PC-9 (cell line): ENCODE measurements at regions of chr17 and their contacts with region 1.

Region 1: GRCh38 chr17:63015823-63016222 is 49.8 kb downstream of the TANC2 start:
- DNase-seq: no peak
- H3K4me3 ChIP-seq: no peak overlapping the region
- H3K27ac ChIP-seq: no peak overlapping the region
- H3K4me1 ChIP-seq: no peaks in the 10 kb centered on the region
- H3K27me3 ChIP-seq: no peaks in the 10 kb centered on the region
- CTCF ChIP-seq: no peak

Region 2: DNA sequence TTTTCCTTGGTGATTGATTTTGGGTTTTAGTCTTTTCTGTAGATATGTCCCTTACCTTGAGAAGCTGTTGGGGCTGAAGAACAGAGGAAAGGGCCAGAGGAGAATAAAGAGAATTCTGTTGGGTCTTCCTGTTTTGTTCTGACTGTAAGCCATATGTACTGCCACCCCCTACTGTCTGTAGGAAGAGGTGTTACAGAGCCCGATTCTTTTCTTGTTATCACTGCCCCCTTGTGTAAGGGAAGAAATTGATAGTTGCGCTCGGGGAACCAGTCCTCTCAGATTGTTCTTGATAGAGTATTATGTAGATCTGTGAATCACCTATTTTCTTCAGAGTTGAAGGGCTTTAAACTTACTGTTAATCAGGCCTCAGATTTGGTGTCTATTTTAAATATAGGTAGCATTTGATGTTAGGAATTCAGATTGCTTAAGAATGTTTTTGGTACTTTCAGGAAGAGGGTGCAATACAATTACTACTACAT is 47.3 kb before region 1 on chr17:
- CTCF ChIA-PET with region 1: no interaction called
- POLR2A ChIA-PET with region 1: no interaction called
- intact Hi-C with region 1: no loop called
- DNase-seq: peak; percentile 50 to 84
- H3K4me3 ChIP-seq: peak overlapping the region; percentile 88
- H3K27ac ChIP-seq: peak overlapping the region; percentile 60
- H3K4me1 ChIP-seq: peaks cover 39% of the 10 kb centered on the region
- H3K27me3 ChIP-seq: no peaks in the 10 kb centered on the region
- CTCF ChIP-seq: peak; percentile 86

Region 3: GRCh38 chr17:62995377-62995885 is 20.4 kb before region 1 on chr17:
- CTCF ChIA-PET with region 1: no interaction called
- POLR2A ChIA-PET with region 1: interaction called, 10 read pairs
- intact Hi-C with region 1: no loop called
- DNase-seq: no peak
- H3K4me3 ChIP-seq: no peak overlapping the region
- H3K27ac ChIP-seq: no peak overlapping the region
- H3K4me1 ChIP-seq: no peaks in the 10 kb centered on the region; the same call in 1 of the 2 replicates
- H3K27me3 ChIP-seq: no peaks in the 10 kb centered on the region
- CTCF ChIP-seq: peak; percentile 47